H1 (cell line): ENCODE measurements at regions of chr11 and their contacts with region 1.

Region 1: DNA sequence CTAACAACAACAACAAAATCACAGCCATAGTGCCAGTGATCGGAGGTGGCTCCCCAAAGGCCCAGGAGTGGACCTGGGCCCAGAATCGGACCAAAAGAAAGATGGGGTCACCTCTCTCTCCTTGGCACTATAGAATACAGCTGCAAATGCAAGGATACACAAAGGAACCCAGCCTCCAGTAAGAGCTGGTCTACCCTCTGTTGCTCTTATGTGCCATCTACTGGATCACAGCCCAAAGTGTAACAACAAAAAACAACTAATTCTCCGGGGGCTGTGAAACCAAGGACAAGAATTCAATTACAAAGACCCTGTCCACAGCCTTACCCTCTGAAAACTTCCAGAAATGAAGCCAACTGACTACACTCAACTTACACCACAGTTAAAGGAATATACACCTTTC is 21.6 kb downstream of the OR8G5 start:
- DNase-seq: peak in 1 of 2 experiments; percentile 48
- H3K4me3 ChIP-seq: no peak overlapping the region
- H3K27ac ChIP-seq: no peak overlapping the region
- H3K4me1 ChIP-seq: peaks cover 0 to 3% (median 0%) of the 10 kb centered on the region in 4 experiments; a peak in 1 of 7 replicates
- H3K27me3 ChIP-seq: no peaks in the 10 kb centered on the region
- CTCF ChIP-seq: peak in 2 of 3 experiments; percentile 49 to 57; a peak in 3 of 4 replicates
- EP300 ChIP-seq: no peak
- POLR2A ChIP-seq: no peak
- RAD21 ChIP-seq: peak; percentile 63 to 66

Region 2: GRCh38 chr11:124114942-124115781 is 162.6 kb before region 1 on chr11 and contains the start of gene VWA5A:
- CTCF ChIA-PET with region 1: interaction called, 10 read pairs
- POLR2A ChIA-PET with region 1: no interaction called
- DNase-seq: peak; percentile 57 to 70
- H3K4me3 ChIP-seq: peak within 1 kb of the TSS; percentile 55 to 70 (median 63)
- H3K27ac ChIP-seq: no peak within 1 kb of the TSS
- H3K4me1 ChIP-seq: peaks cover 0 to 8% (median 4%) of the 10 kb centered on the region in 4 experiments; a peak in 4 of 7 replicates
- H3K27me3 ChIP-seq: no peaks in the 10 kb centered on the region
- CTCF ChIP-seq: no peak
- EP300 ChIP-seq: no peak
- POLR2A ChIP-seq: peak; percentile 48 to 81
- RAD21 ChIP-seq: peak in 1 of 2 experiments; percentile 15; a peak in 1 of 4 replicates
- total RNA-seq, gene VWA5A: 18.8 and 20.4 TPM in 2 replicates